ENCODE measurements at regions of chr20 and their contacts with region 1.

Region 1: DNA sequence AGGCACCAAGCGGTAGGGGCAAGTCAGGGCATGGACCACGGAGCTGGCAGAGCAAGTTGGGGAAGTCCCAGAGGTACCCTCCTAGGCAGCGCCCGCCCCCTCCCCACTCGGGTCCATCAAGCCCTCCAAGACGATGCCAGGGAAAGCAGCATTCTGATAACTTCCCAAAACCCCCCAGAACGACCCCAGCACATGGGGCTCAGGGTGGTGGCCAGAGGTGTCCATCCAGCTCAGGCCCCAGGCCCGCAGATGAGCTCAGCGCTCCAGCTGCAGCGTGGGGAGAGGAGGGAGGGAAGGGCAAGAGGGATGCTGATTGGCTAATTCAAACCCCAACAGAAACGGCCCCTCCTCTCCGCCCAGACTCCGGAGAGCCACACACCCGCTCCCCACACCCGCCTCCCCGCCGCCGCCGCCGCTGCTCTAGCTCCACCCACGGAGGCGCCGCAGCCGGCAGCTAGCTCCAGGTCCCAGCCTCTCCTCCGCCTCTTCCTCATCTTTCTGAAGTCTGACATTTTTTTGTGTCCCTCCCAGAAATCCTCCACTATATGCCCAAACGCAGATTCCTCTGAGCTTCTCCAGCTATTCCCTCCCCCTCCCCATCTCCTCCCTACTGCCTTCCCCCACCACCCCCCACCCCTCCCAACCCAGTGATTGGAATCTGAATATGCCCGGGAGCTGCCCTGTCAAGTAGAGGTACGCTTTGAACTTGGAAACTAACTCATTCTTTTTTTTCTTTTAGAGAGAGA is 40.3 kb upstream of the TLDC2 start:
- DNase-seq: peak; percentile 94

Region 2: GRCh38 chr20:36754656-36755222 is 80.9 kb before region 1 on chr20:
- CTCF ChIA-PET with region 1: no interaction called
- POLR2A ChIA-PET with region 1: no interaction called
- DNase-seq: peak; percentile 63

Region 3: DNA sequence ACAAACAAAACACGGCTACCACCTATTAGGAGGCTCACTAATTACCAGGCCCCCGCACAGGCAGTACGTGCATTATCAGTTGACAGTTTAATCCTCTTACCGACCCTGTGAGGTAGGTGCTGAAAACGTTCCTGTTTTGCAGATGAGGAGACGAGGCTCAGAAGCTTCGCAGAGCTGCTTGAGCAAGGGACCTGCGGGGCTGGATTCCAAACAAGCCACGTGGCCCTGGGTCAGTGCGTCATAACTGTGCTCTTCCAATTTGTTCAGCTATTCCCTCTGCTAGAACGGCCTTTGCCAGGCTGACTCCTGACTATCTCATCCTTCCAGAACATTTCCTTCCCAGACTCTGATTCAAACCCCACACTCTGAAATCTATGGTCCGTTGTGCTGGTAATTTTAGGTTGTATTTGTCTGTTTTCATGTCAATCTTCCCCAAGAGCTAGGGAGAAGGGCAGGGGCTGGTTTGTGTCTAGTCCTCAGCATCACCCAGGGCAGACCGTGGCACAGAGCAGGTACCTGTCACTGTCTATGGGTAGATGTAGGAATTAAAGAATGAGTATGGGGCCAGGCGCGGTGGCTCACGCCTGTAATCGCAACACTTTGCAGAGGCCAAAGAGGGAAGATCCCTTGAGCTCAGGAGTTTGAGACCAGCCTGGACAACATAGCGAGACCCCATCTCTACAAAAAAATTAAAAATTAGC is 11.5 kb after region 1 on chr20:
- CTCF ChIA-PET with region 1: interaction called, 25 read pairs
- POLR2A ChIA-PET with region 1: interaction called, 5 read pairs
- DNase-seq: no peak

Measured in HEK293T (cell line).